ENCODE measurements at regions of chr5 and their contacts with region 1.

Region 1: GRCh38 chr5:121962347-121962670 is 534 bp downstream of the SRFBP1 start:
- DNase-seq: no peak
- H3K4me3 ChIP-seq: peak overlapping the region; percentile 87 to 98 (median 90)
- H3K27ac ChIP-seq: peak overlapping the region; percentile 69; the same call in 1 of the 2 replicates
- H3K4me1 ChIP-seq: 0 out of 7 replicates have a peak, but pooled peaks cover 0 to 3% (median 0%) of the 10 kb centered on the region in 4 experiments
- H3K27me3 ChIP-seq: no peaks in the 10 kb centered on the region
- CTCF ChIP-seq: no peak
- EP300 ChIP-seq: no peak
- POLR2A ChIP-seq: no peak
- RAD21 ChIP-seq: no peak

Region 2: GRCh38 chr5:121851643-121852574 is 110.4 kb before region 1 on chr5 and contains the start of gene FTMT:
- CTCF ChIA-PET with region 1: no interaction called
- POLR2A ChIA-PET with region 1: no interaction called
- DNase-seq: no peak
- H3K4me3 ChIP-seq: no peak within 1 kb of the TSS
- H3K27ac ChIP-seq: no peak within 1 kb of the TSS
- H3K4me1 ChIP-seq: peaks cover 0 to 4% (median 2%) of the 10 kb centered on the region in 4 experiments; a peak in 1 of 7 replicates
- H3K27me3 ChIP-seq: no peaks in the 10 kb centered on the region
- CTCF ChIP-seq: no peak
- EP300 ChIP-seq: no peak
- POLR2A ChIP-seq: no peak
- RAD21 ChIP-seq: no peak
- total RNA-seq, gene FTMT: not detected in 2 replicates

Region 3: DNA sequence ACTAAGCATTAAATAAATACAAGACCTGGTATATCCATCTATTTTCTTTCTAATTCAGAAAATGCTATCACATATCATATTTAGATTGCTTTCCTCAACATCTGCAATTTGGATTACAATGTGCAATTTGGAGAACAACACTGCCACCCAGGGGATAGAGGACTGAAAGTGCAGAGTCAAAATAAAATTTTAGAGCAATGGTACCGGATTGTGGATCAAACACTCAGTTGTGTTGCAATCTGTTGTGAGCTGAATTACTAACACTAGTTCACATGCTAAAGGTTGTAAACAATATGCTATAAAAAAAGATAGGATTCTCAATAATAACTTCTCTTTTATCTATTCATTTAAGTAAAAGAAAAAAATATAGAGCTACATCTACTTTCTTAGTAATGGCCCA is 12.4 kb before region 1 on chr5:
- CTCF ChIA-PET with region 1: interaction called, 30 read pairs
- POLR2A ChIA-PET with region 1: interaction called, 3 read pairs
- DNase-seq: no peak
- H3K4me3 ChIP-seq: no peak overlapping the region
- H3K27ac ChIP-seq: no peak overlapping the region
- H3K4me1 ChIP-seq: no peaks in the 10 kb centered on the region
- H3K27me3 ChIP-seq: no peaks in the 10 kb centered on the region
- CTCF ChIP-seq: peak in 2 of 3 experiments; percentile 50 to 61; a peak in 2 of 4 replicates
- EP300 ChIP-seq: no peak
- POLR2A ChIP-seq: no peak
- RAD21 ChIP-seq: peak; percentile 85 to 87

Region 4: GRCh38 chr5:122101636-122102285 is 139.5 kb after region 1 on chr5:
- CTCF ChIA-PET with region 1: interaction called, 10 read pairs
- POLR2A ChIA-PET with region 1: no interaction called
- DNase-seq: no peak
- H3K4me3 ChIP-seq: no peak overlapping the region
- H3K27ac ChIP-seq: no peak overlapping the region
- H3K4me1 ChIP-seq: peaks cover 2 to 8% (median 5%) of the 10 kb centered on the region in 4 experiments; a peak in 2 of 7 replicates
- H3K27me3 ChIP-seq: peaks cover 0 to 1% (median 0%) of the 10 kb centered on the region in 4 experiments; a peak in 1 of 7 replicates
- CTCF ChIP-seq: peak in 2 of 3 experiments; percentile 31 to 46; a peak in 2 of 4 replicates
- EP300 ChIP-seq: no peak
- POLR2A ChIP-seq: no peak
- RAD21 ChIP-seq: peak; percentile 53 to 54

Region 5: DNA sequence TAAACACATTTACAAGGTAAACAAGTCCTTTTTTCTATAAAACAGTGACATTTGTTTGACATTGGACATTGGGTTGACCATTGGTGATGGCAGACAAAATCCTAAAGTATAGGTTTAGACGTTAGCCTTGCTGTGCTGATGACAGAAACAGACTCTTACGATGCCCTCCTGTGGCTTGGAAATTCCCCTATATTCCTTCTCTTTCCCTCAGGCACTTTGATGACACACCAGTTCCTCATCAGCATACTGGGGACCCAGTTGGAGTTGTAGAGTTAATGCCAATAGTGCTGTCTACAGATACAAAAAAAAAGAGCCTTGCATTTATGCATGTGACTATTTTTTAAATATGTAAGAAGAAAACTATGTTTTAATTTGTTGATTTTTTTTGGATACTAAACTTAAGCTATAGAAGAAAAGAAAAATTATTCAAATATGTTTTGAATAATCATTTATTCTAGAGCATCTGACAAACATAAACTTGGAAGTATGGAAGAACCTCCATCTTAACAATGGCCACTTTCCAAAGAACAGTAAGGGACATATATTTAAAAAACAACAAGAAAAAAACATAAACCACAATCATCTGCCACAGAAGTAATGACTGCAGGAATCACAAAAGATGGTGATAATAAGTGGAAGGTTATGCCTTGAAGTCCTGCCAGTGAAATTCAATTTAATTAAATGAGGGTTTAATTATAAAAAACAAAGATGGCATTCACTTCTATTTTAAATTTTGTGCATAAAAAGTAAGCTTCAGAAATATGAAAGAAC is 274.1 kb after region 1 on chr5:
- CTCF ChIA-PET with region 1: no interaction called
- POLR2A ChIA-PET with region 1: no interaction called
- DNase-seq: no peak
- H3K4me3 ChIP-seq: no peak overlapping the region
- H3K27ac ChIP-seq: no peak overlapping the region
- H3K4me1 ChIP-seq: no peaks in the 10 kb centered on the region
- H3K27me3 ChIP-seq: no peaks in the 10 kb centered on the region
- CTCF ChIP-seq: no peak
- EP300 ChIP-seq: no peak
- POLR2A ChIP-seq: no peak
- RAD21 ChIP-seq: no peak